Heart right ventricle (tissue), 16 donors: ENCODE measurements at regions of chr19 and their contacts with region 1.

Region 1: DNA sequence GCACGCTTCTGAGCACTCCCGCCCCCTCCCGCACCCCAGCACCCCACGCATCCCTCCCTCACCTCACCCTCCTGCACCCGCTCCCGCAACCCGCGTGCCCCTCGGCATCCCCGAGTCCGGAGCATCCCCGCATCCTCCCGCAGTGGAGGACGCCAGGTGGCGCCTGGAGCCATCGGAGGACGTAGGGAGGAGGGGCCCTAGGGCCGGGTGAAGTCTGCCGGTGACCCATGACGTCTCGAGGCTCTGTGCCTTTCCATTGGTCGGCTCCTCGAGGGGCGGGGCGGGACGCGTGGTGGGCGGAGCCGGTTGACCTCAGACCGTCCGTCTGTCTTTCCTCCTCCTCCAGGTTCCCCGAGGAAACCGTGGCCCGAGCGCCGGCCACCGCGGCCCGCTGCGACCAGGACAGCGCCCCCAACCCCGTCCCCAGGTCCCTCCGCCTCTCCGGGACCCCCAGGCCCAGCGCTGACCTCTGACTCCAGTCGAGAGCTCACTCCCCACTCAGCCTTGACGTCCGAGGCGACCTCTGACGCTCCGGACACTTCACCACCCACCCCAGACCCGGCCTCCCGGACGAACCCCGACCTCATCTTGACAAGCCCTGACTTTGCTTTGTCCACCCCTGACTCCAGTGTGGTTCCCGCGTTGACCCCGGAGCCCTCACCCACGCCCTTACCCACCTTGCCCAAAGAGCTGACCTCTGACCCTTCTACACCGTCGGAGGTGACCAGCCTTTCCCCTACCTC is 19.9 kb downstream of the SBK2 start:
- DNase-seq: peak; percentile 93 to 96
- ATAC-seq: peak; percentile 98 to 100 (median 99)
- H3K4me3 ChIP-seq: peak overlapping the region in 9 of 10 donors; percentile 29 to 61 (median 59)
- H3K27ac ChIP-seq: peak overlapping the region; percentile 86 to 99 (median 96)
- H3K4me1 ChIP-seq: peaks cover 3 to 22% (median 9%) of the 10 kb centered on the region in 9 donors
- H3K27me3 ChIP-seq: no peaks in the 10 kb centered on the region
- CTCF ChIP-seq: peak; percentile 73 to 92 (median 81)

Region 2: GRCh38 chr19:55580628-55581144 is 63.6 kb after region 1 on chr19 and contains the start of gene ZNF579:
- intact Hi-C with region 1: loop called in 3 of 10 experiments (anchors 2 to 5 kb)
- DNase-seq: peak; percentile 87 to 92
- ATAC-seq: peak; percentile 86 to 95 (median 89)
- H3K4me3 ChIP-seq: peak within 1 kb of the TSS; percentile 84 to 100 (median 94)
- H3K27ac ChIP-seq: peak within 1 kb of the TSS; percentile 94 to 99 (median 96)
- H3K4me1 ChIP-seq: peaks cover 0 to 22% (median 16%) of the 10 kb centered on the region in 9 donors
- H3K27me3 ChIP-seq: peaks cover 0 to 10% (median 0%) of the 10 kb centered on the region in 7 donors
- CTCF ChIP-seq: no peak
- total RNA-seq, gene ZNF579: 7.1 to 16.9 (median 9.6) TPM

Region 3: DNA sequence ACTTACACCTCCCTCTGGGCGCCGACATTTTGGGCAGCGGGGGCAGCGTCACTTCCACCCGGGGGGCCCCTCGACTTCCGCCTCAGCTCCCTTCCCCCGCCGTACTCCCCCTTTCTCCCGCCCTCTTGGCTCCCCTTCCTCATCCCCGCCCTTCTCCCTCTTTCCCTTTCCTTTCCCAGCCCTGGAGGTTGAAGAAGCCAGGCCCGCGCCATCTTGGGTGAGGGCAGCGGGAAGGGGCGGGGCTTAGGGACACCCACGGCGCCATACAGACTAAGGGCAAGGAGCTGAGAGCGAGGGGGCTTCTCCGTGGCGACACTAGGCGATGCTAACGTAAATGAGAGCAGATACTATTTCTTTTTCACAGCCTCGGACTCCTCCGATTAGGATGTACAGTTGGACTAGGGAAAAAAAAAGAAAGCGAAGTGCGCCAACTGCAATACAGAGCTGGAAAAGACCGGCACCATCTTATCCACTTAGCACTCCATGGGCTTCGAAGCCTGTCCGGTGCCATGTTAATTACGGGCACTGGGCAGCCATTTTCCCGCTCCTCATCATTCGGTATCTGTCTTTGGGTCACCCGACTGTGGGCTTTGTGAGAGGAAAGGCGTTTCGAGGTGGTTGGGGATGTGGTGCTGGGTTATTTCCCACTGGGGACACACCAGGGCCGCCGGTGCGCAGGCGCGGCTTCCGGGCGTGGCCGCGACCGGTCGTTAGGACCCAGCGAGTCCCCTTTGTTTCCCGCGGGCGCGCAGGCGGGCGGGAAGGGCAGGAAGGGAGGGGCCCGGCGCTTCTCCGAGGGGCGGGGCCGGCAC is 82.6 kb after region 1 on chr19 and contains the start of gene FIZ1:
- intact Hi-C with region 1: loop called in 4 of 10 experiments (anchors 2 to 10 kb)
- DNase-seq: peak; percentile 98 to 99
- ATAC-seq: peak; percentile 86 to 96 (median 94)
- H3K4me3 ChIP-seq: peak within 1 kb of the TSS; percentile 54 to 94 (median 76)
- H3K27ac ChIP-seq: peak within 1 kb of the TSS; percentile 96 to 100 (median 98)
- H3K4me1 ChIP-seq: peaks cover 4 to 31% (median 24%) of the 10 kb centered on the region in 9 donors
- H3K27me3 ChIP-seq: no peaks in the 10 kb centered on the region
- CTCF ChIP-seq: no peak
- total RNA-seq, gene FIZ1: 11.6 to 18.8 (median 13.5) TPM

Region 4: DNA sequence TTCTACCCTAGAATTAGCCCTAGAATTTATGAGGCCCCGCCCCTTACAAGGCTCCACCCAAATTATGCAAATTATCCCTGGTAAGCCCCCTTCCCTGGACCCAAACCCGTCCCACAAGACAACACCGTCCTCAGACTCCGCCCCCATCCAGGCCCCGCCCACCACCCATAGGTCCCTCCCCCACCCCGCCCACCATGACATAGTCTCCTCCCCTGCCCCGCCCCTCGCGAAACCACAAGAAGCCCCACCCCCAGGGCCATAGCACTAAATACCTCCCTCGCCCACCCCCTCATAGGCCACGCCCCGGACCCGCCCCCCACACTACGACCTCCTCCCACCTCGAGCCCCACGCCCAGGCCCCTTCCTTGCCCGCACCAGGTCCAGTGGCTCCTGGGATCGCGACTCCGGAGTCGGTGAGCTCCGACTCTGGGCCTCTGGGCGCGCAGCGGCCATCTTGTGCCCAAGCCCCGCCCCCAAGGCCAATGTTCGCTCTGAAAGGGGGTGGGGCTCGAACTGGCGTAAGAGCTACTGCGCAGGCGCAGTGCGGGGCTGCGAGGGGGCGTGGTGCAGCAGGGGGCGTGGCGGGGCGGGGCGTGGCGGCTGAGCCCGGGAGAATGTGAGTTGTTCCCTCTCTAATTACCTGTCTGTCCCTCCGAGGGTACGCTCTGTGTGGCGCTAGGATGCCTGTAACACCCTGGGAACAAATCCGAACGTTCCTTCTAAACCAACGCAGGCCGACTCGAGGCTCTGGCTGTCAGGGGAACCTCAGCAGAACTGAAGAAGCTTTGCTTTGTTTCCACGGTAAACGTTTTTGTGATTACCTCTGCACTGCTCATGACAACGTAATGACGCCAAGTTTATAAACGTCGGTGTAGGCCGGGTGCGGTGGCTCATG is 107.3 kb after region 1 on chr19 and contains the start of gene ZNF784:
- intact Hi-C with region 1: loop called in 4 of 10 experiments (anchors 2 to 5 kb)
- DNase-seq: peak; percentile 93 to 95
- ATAC-seq: peak; percentile 92 to 97 (median 95)
- H3K4me3 ChIP-seq: peak within 1 kb of the TSS; percentile 32 to 63 (median 58)
- H3K27ac ChIP-seq: peak within 1 kb of the TSS; percentile 85 to 97 (median 92)
- H3K4me1 ChIP-seq: peaks cover 5 to 44% (median 15%) of the 10 kb centered on the region in 9 donors
- H3K27me3 ChIP-seq: no peaks in the 10 kb centered on the region
- CTCF ChIP-seq: no peak
- total RNA-seq, gene ZNF784: 8.9 to 16.4 (median 12.2) TPM